Common myeloid progenitor, CD34-positive (primary cell): ENCODE measurements at regions of chr4 and their contacts with region 1.

Region 1: GRCh38 chr4:173301518-173302201 is 32.5 kb downstream of the HMGB2 start:
- DNase-seq: peak; percentile 74 to 91 (median 87)
- H3K4me3 ChIP-seq: peak overlapping the region in 2 of 7 experiments; percentile 35 to 38
- H3K27ac ChIP-seq: peak overlapping the region in 1 of 2 experiments; percentile 27
- H3K4me1 ChIP-seq: peaks cover 0 to 16% (median 6%) of the 10 kb centered on the region in 4 experiments
- H3K27me3 ChIP-seq: no peaks in the 10 kb centered on the region

Region 2: GRCh38 chr4:173280998-173281397 is 20.7 kb before region 1 on chr4:
- CTCF ChIA-PET with region 1: interaction called, 37 read pairs
- POLR2A ChIA-PET with region 1: no interaction called
- DNase-seq: no peak
- H3K4me3 ChIP-seq: peak overlapping the region in 1 of 7 experiments; percentile 20
- H3K27ac ChIP-seq: peak overlapping the region in 1 of 2 experiments; percentile 50
- H3K4me1 ChIP-seq: peaks cover 0 to 27% (median 0%) of the 10 kb centered on the region in 4 experiments
- H3K27me3 ChIP-seq: no peaks in the 10 kb centered on the region

Region 3: GRCh38 chr4:173288296-173288695 is 13.4 kb before region 1 on chr4:
- CTCF ChIA-PET with region 1: interaction called, 37 read pairs
- POLR2A ChIA-PET with region 1: no interaction called
- DNase-seq: peak; percentile 65 to 83 (median 81)
- H3K4me3 ChIP-seq: peak overlapping the region in 2 of 7 experiments; percentile 21 to 63
- H3K27ac ChIP-seq: peak overlapping the region; percentile 73 to 89
- H3K4me1 ChIP-seq: peaks cover 0 to 5% (median 0%) of the 10 kb centered on the region in 4 experiments
- H3K27me3 ChIP-seq: no peaks in the 10 kb centered on the region

Region 4: DNA sequence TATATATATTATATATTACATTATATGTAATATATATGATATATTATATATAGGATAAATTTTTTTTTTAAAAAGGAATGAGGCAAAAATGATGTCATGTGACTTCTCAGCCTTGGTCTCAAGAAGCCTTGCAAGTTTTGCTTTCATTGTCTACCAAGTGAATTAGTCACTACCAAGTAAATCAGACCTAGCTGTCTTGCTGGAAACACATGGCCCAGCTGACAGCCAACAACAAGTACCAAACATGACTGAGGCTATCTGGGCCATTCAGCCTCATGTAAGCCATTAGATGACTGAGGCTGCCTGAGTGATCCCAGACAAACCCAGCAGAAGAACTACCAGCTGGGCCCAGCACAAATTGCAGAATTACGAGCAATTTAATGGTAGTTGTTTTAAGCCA is 183.5 kb after region 1 on chr4:
- CTCF ChIA-PET with region 1: no interaction called
- POLR2A ChIA-PET with region 1: no interaction called
- DNase-seq: peak in 2 of 3 donors; percentile 69 to 77
- H3K4me3 ChIP-seq: no peak overlapping the region
- H3K27ac ChIP-seq: no peak overlapping the region
- H3K4me1 ChIP-seq: peaks cover under 1 to 10% (median 3%) of the 10 kb centered on the region in 4 experiments
- H3K27me3 ChIP-seq: no peaks in the 10 kb centered on the region